Uterus (tissue), 4 donors: ENCODE measurements at regions of chr9 and their contacts with region 1.

Region 1: DNA sequence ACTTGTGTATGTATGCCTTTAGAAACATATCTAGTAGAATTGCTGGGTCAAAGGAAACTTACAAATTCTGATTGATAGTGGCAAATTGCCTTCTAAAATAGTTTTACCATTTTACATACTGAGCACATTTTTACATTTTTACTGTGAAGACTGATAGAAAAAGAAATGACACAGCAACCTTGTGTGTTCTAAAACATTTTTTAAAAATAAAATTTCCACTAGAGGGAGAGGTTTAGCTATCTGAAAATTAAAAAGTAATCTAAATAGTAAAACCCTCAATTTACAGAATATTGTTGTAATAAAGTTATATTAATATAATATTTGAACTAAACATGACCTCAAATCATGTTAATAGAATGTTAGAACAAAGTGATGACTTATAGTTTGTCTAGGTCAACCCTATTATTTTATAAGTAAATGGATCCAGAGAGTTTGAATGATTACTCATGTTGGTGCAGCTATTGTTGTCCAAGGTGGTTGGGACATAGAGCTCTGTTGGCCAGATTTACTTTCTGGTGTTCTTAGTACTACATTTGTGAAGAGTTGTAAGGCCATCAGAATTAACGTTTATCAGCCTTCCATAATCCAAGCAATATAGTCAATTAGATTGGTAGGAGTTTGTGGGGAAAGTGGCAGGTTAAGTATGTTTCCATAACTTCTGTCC is 17.2 kb downstream of the CENPP start:
- DNase-seq: no peak
- H3K4me3 ChIP-seq: no peak overlapping the region
- H3K27ac ChIP-seq: peak overlapping the region; percentile 61 to 80
- H3K4me1 ChIP-seq: peaks cover 0 to 5% of the 10 kb centered on the region in 2 donors
- H3K27me3 ChIP-seq: no peaks in the 10 kb centered on the region
- CTCF ChIP-seq: peak in 3 of 4 experiments; percentile 24 to 47 (median 44)
- POLR2A ChIP-seq: no peak

Region 2: GRCh38 chr9:92634712-92635605 is 292.0 kb after region 1 on chr9:
- intact Hi-C with region 1: loop called (anchors 5 kb)
- DNase-seq: peak; percentile 86 to 88
- H3K4me3 ChIP-seq: no peak overlapping the region
- H3K27ac ChIP-seq: peak overlapping the region; percentile 62 to 76
- H3K4me1 ChIP-seq: no peaks in the 10 kb centered on the region
- H3K27me3 ChIP-seq: no peaks in the 10 kb centered on the region
- CTCF ChIP-seq: peak; percentile 92 to 98 (median 98)
- POLR2A ChIP-seq: no peak